Endothelial cell of umbilical vein (primary cell): ENCODE measurements at regions of chr19 and their contacts with region 1.

Region 1: DNA sequence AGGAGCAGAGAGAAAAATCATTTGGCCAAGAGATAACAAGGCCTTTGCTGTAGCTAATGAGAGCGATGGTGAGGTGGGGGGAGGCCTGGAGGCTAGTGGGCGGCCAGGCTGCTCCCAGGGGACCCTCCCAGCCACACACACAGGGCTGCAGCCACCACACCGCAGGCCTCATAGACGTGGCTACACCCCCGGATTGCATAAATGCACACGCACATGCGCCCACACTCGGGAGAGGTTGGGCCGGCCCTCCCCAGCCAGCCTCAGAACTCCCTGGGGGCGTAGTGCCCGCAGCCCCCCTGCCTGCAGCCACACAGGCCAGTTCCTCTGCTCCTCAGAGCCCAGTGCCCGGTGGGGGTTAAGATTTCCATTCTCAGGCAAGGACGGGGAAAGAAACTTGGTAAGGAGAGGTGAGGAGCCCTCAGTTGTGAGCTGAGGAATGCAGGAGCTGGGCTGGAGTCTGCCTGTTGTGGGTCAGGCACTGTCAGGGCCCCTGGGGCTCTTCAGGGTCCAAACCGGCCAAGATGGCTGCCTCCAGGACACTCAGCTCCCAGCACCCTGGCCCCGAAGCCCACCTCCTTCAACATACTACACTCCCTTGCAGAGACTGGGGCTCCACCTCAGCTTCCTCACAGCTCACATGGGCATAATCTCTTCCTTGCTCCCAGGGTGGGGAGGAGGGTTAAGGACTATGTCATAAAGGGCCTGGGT is 8.0 kb downstream of the PTH2 start:
- DNase-seq: no peak
- H3K4me3 ChIP-seq: no peak overlapping the region
- H3K27ac ChIP-seq: no peak overlapping the region
- H3K4me1 ChIP-seq: no peaks in the 10 kb centered on the region
- H3K27me3 ChIP-seq: peaks cover 13 to 23% of the 10 kb centered on the region in 2 experiments
- CTCF ChIP-seq: no peak
- POLR2A ChIP-seq: no peak

Region 2: GRCh38 chr19:49340069-49340864 is 75.0 kb before region 1 on chr19:
- CTCF ChIA-PET with region 1: no interaction called
- POLR2A ChIA-PET with region 1: no interaction called
- dilution Hi-C with region 1: no loop called
- intact Hi-C with region 1: no loop called
- DNase-seq: peak; percentile 56
- H3K4me3 ChIP-seq: no peak overlapping the region
- H3K27ac ChIP-seq: no peak overlapping the region
- H3K4me1 ChIP-seq: peaks cover 15% of the 10 kb centered on the region
- H3K27me3 ChIP-seq: no peaks in the 10 kb centered on the region
- CTCF ChIP-seq: no peak
- POLR2A ChIP-seq: no peak

Region 3: GRCh38 chr19:49425922-49426592 is 10.8 kb after region 1 on chr19:
- CTCF ChIA-PET with region 1: interaction called, 10 read pairs
- POLR2A ChIA-PET with region 1: no interaction called
- dilution Hi-C with region 1: no loop called
- intact Hi-C with region 1: no loop called
- DNase-seq: no peak
- H3K4me3 ChIP-seq: no peak overlapping the region
- H3K27ac ChIP-seq: no peak overlapping the region
- H3K4me1 ChIP-seq: no peaks in the 10 kb centered on the region
- H3K27me3 ChIP-seq: peaks cover 80 to 86% of the 10 kb centered on the region in 2 experiments
- CTCF ChIP-seq: no peak
- POLR2A ChIP-seq: no peak

Region 4: DNA sequence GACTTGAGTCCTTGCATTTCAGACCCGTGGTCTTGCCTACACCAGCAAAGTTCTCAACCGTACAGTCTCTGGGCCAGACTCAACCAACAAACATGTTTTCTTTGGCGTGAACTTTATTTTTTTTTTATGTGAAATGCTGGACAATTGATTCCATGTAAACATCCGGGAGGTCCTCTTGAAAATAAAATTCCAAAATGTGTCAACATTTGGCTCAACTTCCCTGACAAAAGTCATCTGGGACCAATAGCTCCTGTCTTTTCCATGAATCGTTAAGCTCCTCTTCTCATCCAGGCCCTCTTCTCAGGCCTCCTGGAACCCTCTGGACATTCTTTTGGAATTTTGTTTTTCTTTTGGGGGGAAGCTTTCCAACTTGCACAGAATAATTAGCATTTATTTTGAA is 40.5 kb after region 1 on chr19:
- CTCF ChIA-PET with region 1: no interaction called
- POLR2A ChIA-PET with region 1: no interaction called
- dilution Hi-C with region 1: no loop called
- intact Hi-C with region 1: no loop called
- DNase-seq: no peak
- H3K4me3 ChIP-seq: no peak overlapping the region
- H3K27ac ChIP-seq: no peak overlapping the region
- H3K4me1 ChIP-seq: peaks cover 7% of the 10 kb centered on the region
- H3K27me3 ChIP-seq: no peaks in the 10 kb centered on the region
- CTCF ChIP-seq: no peak
- POLR2A ChIP-seq: no peak